ENCODE measurements at regions of chr4 and their contacts with region 1.

Region 1: DNA sequence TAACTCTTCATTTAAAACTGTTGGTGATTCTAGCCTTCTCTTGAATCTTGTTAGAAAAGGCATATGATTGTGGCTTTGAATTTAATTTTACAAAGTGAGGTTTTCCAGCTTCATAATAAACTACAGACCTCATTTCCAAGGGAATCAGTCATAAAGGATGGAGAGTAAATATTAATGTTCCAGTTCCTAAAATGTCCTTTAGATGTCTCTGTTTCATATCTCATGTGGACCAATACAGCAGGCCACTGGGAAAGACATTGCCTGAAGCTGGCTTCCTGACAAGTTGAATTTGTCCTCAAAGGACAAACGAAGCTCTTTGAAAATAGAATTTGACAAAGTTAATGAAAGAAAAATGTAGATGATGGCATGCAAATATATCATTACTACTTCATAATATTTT is 125.4 kb downstream of the ZNF330 start:
- DNase-seq: no peak
- H3K4me3 ChIP-seq: no peak overlapping the region
- H3K27ac ChIP-seq: no peak overlapping the region
- H3K4me1 ChIP-seq: peaks cover 0 to 32% (median 4%) of the 10 kb centered on the region in 4 donors
- H3K27me3 ChIP-seq: no peaks in the 10 kb centered on the region
- CTCF ChIP-seq: peak; percentile 54 to 56

Region 2: DNA sequence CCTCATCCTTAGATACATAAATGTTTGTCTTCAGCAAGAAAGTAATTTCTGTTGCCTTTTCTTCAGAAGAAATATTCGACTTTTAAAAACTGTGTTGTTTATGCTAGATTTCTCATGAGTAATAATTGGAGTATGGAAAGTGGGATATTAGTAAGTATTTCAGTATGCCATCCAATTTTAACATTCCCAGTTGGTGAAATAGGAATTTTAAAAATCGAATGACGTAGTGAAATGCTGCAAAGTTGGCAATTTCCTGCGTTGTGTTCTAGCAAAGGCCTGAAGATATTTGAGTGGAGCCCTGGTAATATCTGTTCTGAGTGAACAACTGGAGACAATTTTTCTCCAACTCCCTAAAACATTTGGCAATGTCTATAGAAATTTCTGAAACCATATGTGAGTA is 64.7 kb after region 1 on chr4:
- intact Hi-C with region 1: no loop called
- DNase-seq: no peak
- H3K4me3 ChIP-seq: no peak overlapping the region
- H3K27ac ChIP-seq: no peak overlapping the region
- H3K4me1 ChIP-seq: peaks cover 0 to 12% (median 3%) of the 10 kb centered on the region in 4 donors
- H3K27me3 ChIP-seq: no peaks in the 10 kb centered on the region
- CTCF ChIP-seq: no peak

Region 3: DNA sequence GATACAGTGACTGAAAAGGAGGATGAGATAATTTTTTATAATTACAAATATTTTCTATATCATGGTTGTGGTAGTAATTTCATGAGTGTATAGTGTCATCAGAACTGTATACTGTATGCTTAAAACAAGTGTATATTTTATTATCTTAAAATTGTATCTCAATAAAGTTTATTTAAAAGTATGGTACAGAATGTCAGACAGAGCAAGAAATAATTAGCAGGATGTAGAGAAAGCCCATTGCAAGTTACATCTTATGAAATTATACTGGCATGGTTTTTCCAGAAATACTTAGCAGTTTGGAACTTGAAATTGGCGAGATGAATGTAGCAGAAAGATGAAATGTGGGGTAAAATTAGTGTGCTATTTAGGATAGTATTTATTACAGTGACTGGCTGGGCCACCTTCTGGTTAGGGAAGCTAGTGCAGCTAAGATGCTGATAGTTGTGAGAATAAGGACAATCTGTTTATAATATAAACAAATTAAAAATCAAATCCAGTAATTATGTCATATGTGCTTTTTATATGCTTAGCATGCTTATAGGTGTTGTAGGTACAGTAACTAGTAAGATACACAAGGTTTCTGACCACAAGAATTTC is 365.0 kb after region 1 on chr4:
- intact Hi-C with region 1: loop called (anchors 10 kb)
- DNase-seq: peak in 1 of 2 donors; percentile 31
- H3K4me3 ChIP-seq: no peak overlapping the region
- H3K27ac ChIP-seq: no peak overlapping the region
- H3K4me1 ChIP-seq: no peaks in the 10 kb centered on the region
- H3K27me3 ChIP-seq: no peaks in the 10 kb centered on the region
- CTCF ChIP-seq: peak; percentile 63 to 64

Region 4: GRCh38 chr4:142091691-142092182 is 745.6 kb after region 1 on chr4:
- intact Hi-C with region 1: loop called (anchors 5 kb)
- DNase-seq: peak; percentile 30 to 66
- H3K4me3 ChIP-seq: no peak overlapping the region
- H3K27ac ChIP-seq: peak overlapping the region; percentile 72 to 73
- H3K4me1 ChIP-seq: peaks cover 0 to 49% (median 8%) of the 10 kb centered on the region in 4 donors
- H3K27me3 ChIP-seq: no peaks in the 10 kb centered on the region
- CTCF ChIP-seq: no peak

Region 5: GRCh38 chr4:142846729-142847596 is 1500.8 kb after region 1 on chr4:
- intact Hi-C with region 1: loop called (anchors 10 kb)
- DNase-seq: peak in 1 of 2 donors; percentile 67
- H3K4me3 ChIP-seq: peak overlapping the region; percentile 70 to 93
- H3K27ac ChIP-seq: peak overlapping the region; percentile 83
- H3K4me1 ChIP-seq: peaks cover 0 to 23% (median 7%) of the 10 kb centered on the region in 4 donors
- H3K27me3 ChIP-seq: peaks cover 0 to 5% of the 10 kb centered on the region in 2 donors
- CTCF ChIP-seq: peak in 1 of 2 experiments; percentile 26